Vagina (tissue), 2 donors: ENCODE measurements at regions of chr5 and their contacts with region 1.

Region 1: GRCh38 chr5:159878988-159879471 is 37.3 kb upstream of the ADRA1B start:
- DNase-seq: no peak
- H3K4me3 ChIP-seq: no peak overlapping the region
- H3K27ac ChIP-seq: peak overlapping the region; percentile 28
- H3K4me1 ChIP-seq: peaks cover 13% of the 10 kb centered on the region
- H3K27me3 ChIP-seq: no peaks in the 10 kb centered on the region
- CTCF ChIP-seq: no peak
- POLR2A ChIP-seq: no peak

Region 2: DNA sequence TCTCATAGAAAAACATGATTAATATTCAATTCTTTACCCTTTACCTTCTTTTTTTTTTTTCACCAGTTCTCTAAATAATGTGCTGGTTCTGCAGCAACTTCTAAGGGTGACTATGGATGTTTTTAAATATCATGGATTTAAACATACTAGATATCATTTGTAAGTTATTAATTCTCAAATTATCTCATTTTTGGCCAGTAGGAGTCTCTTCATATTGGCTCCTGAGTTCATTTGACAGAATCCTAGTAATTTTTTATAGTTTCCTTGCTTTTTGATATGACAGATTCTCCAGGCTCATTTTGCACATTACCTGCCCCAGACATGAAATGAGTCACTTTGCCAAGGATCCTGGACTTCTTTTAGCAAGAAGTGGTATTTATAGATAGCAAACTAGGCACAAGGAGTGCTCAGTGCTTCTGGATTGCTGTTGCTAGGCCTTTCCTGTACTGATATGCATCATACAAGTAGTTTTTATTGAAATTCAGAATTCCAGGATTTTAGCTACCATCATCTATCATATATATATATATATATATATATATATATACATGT is 347.4 kb before region 1 on chr5:
- intact Hi-C with region 1: loop called (anchors 10 kb)
- DNase-seq: no peak
- H3K4me3 ChIP-seq: no peak overlapping the region
- H3K27ac ChIP-seq: no peak overlapping the region
- H3K4me1 ChIP-seq: no peaks in the 10 kb centered on the region
- H3K27me3 ChIP-seq: no peaks in the 10 kb centered on the region
- CTCF ChIP-seq: no peak
- POLR2A ChIP-seq: no peak

Region 3: DNA sequence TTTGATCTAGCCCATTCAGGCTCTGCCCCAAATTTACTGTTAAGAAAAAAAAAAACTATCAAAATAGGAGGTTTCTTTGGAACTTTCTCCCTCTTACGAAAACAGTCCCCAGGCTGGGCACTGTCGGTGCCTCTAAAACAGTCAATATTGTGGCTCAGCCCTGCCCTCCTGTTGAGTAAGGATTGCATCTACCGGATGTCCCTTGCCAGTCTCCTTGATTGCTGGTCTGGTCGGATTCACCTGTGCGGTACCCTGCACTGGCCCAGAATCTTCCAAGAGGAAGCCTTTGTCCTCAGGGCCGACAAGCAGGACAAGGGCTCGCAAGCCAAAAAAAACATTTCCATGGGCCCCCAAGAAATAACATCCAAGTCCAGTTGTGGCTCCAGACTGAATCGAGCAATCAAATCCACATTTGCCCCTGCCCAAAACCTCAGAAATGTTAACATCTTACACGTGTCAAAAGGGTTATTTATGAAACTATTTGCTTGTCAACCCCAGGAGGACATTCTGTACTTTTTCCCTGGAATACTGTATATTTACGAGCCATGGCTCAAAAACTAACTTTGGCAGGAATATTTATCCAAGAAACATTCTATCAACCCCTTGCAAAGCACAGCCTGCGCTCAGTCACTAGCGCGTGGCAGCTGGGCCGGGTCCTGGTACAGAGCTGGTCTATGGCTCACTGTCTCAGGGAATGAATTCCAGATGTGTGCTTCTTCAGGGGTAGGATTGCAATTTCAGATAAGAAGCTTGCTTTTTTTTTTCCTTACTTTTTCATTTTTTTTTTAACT is 91.9 kb before region 1 on chr5:
- intact Hi-C with region 1: loop called (anchors 5 kb)
- DNase-seq: peak in 1 of 2 donors; percentile 88
- H3K4me3 ChIP-seq: no peak overlapping the region
- H3K27ac ChIP-seq: no peak overlapping the region
- H3K4me1 ChIP-seq: peaks cover 23% of the 10 kb centered on the region
- H3K27me3 ChIP-seq: no peaks in the 10 kb centered on the region
- CTCF ChIP-seq: no peak
- POLR2A ChIP-seq: no peak